Activated naive CD4-positive, alpha-beta T cell treated with anti-CD3 and anti-CD28 coated beads for 36 hours (primary cell): ENCODE measurements at regions of chr5 and their contacts with region 1.

Region 1: DNA sequence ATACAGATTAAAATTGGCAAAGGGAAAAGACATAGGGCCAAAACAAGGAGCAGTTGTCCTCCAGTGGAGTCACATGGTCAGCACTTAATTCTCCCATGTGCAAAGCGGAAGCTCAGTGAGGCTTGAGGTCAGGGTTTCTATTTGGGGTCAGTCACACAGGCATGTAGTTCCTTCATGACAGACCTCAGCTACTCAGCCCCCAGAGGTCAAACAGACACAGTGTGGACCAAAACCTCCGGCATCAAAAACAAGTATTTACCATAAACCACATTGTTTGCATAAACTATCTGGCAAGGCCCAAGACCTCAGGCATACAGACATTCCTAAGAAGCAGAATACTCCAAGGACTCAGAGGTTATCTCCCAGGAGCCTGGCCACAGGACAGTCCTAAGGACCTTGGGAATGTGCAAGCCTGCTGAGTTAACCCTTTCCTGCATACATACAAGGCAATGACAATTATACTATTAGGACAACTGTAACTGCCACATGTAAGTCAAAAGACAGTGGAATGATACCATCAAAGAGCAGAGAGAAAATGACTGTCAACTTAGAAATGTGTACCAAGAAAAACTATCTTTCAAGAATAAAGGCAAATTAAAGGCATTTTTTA is 28.7 kb upstream of the FNIP1 start:
- DNase-seq: no peak
- H3K4me3 Mint-ChIP-seq: no peak overlapping the region
- H3K27ac Mint-ChIP-seq: no peak overlapping the region
- H3K4me1 Mint-ChIP-seq: peaks cover 3% of the 10 kb centered on the region
- H3K27me3 Mint-ChIP-seq: no peaks in the 10 kb centered on the region

Region 2: DNA sequence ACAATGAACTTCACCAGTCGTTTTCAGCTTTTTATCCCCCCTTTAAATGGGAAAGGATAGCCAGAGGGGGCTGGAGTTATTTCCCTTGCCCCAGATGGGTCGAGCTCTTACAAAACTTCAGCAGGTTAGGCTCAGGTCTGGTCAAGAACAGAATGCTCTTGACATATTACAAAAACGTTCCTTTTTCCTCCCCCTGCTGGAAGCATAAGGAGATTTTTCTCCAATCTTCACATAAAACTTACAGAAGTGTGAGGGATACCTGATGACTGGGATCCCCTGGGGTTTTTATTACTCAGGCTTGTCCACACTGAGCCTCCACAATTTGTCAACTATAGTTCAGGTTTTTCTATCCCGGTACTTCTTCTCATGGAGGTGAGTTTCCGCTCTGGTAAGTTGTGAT is 308.9 kb after region 1 on chr5:
- CTCF ChIA-PET with region 1: no interaction called
- intact Hi-C with region 1: loop called (anchors 10 kb)
- DNase-seq: no peak
- H3K4me3 Mint-ChIP-seq: no peak overlapping the region
- H3K27ac Mint-ChIP-seq: no peak overlapping the region
- H3K4me1 Mint-ChIP-seq: no peaks in the 10 kb centered on the region
- H3K27me3 Mint-ChIP-seq: peaks cover 27% of the 10 kb centered on the region